ENCODE measurements at regions of chr11 and their contacts with region 1.

Region 1: GRCh38 chr11:46338988-46339666 is 8.1 kb upstream of the DGKZ start:
- DNase-seq: peak; percentile 87 to 91
- H3K4me3 ChIP-seq: peak overlapping the region in 3 of 4 experiments; percentile 10 to 46 (median 29); a peak in 7 of 8 replicates
- H3K27ac ChIP-seq: peak overlapping the region; percentile 77
- H3K4me1 ChIP-seq: peaks cover 34 to 59% (median 53%) of the 10 kb centered on the region in 4 experiments
- H3K27me3 ChIP-seq: peaks cover under 1 to 5% (median 5%) of the 10 kb centered on the region in 4 experiments; a peak in 6 of 7 replicates
- CTCF ChIP-seq: peak in 1 of 3 experiments; percentile 3; a peak in 1 of 4 replicates
- EP300 ChIP-seq: peak in 1 of 2 experiments; percentile 85; a peak in 1 of 3 replicates
- POLR2A ChIP-seq: peak in 1 of 2 experiments; percentile 39; a peak in 2 of 3 replicates
- RAD21 ChIP-seq: no peak; a peak in 1 of 4 replicates

Region 2: GRCh38 chr11:46285173-46285572 is 54.0 kb before region 1 on chr11:
- CTCF ChIA-PET with region 1: no interaction called
- POLR2A ChIA-PET with region 1: no interaction called
- DNase-seq: no peak
- H3K4me3 ChIP-seq: no peak overlapping the region
- H3K27ac ChIP-seq: no peak overlapping the region
- H3K4me1 ChIP-seq: peaks cover 13 to 21% (median 15%) of the 10 kb centered on the region in 4 experiments
- H3K27me3 ChIP-seq: no peaks in the 10 kb centered on the region
- CTCF ChIP-seq: no peak
- EP300 ChIP-seq: no peak
- POLR2A ChIP-seq: no peak
- RAD21 ChIP-seq: no peak

Region 3: GRCh38 chr11:46315033-46315738 is 23.9 kb before region 1 on chr11:
- CTCF ChIA-PET with region 1: interaction called, 349 read pairs
- POLR2A ChIA-PET with region 1: interaction called, 3 read pairs
- DNase-seq: peak; percentile 77 to 95
- H3K4me3 ChIP-seq: no peak overlapping the region
- H3K27ac ChIP-seq: no peak overlapping the region
- H3K4me1 ChIP-seq: no peaks in the 10 kb centered on the region
- H3K27me3 ChIP-seq: no peaks in the 10 kb centered on the region
- CTCF ChIP-seq: peak; percentile 84 to 93 (median 84)
- EP300 ChIP-seq: no peak
- POLR2A ChIP-seq: no peak
- RAD21 ChIP-seq: peak; percentile 79 to 83

Region 4: DNA sequence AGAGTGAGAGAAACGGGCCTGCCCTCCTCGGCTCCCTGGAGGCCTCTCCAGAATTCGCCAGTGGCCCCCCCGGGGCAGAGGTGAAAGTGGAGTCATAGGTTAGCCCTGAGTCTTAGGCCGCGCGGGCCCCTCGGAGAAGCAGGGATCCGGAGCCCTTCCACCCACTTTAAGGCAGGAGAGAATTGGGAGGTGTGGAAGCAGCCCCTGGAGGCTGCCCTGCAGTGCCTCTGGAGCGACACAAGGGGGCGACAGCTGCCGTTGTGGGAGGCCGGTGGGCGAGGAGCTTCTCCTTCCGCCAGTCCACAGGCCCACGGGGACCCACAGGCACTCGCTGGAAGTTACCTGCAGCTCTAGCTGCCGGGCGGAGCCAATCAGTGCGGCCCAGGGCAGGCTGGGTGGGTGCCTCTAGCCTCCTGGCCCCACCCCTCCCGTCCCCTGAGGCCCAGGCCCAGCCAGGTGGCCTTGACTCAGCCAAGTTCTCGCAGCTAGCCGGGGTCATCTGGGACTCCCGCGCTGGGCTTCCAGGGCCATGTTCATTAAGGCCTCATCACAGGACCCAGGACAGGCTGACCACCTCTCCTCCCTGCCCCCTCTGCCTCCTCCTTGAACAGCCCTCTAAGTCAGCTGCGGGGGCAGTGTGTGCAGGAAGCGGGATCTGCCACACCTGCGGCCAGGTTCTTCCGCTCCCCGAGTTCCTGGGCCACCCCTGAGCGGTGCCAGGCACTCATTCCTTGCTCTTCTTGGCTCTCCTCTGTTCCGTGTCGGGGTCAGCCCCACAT is 13.1 kb after region 1 on chr11:
- CTCF ChIA-PET with region 1: interaction called, 1,004 read pairs
- POLR2A ChIA-PET with region 1: interaction called, 21 read pairs
- DNase-seq: peak in 1 of 2 experiments; percentile 92
- H3K4me3 ChIP-seq: no peak overlapping the region
- H3K27ac ChIP-seq: peak overlapping the region; percentile 29; the same call in 1 of the 2 replicates
- H3K4me1 ChIP-seq: peaks cover 7 to 38% (median 29%) of the 10 kb centered on the region in 4 experiments
- H3K27me3 ChIP-seq: no peaks in the 10 kb centered on the region
- CTCF ChIP-seq: peak; percentile 93 to 98 (median 96)
- EP300 ChIP-seq: no peak; a peak in 1 of 3 replicates
- POLR2A ChIP-seq: no peak
- RAD21 ChIP-seq: peak; percentile 69 to 77

Region 5: GRCh38 chr11:46461461-46461927 is 122.4 kb after region 1 on chr11:
- CTCF ChIA-PET with region 1: no interaction called
- POLR2A ChIA-PET with region 1: no interaction called
- DNase-seq: no peak
- H3K4me3 ChIP-seq: no peak overlapping the region
- H3K27ac ChIP-seq: no peak overlapping the region
- H3K4me1 ChIP-seq: peaks cover 4 to 17% (median 14%) of the 10 kb centered on the region in 4 experiments
- H3K27me3 ChIP-seq: no peaks in the 10 kb centered on the region
- CTCF ChIP-seq: no peak
- EP300 ChIP-seq: no peak
- POLR2A ChIP-seq: no peak
- RAD21 ChIP-seq: no peak

Measured in H1 (cell line).